Mammary epithelial cell (primary cell): ENCODE measurements at regions of chr3 and their contacts with region 1.

Region 1: GRCh38 chr3:197002701-197003454 is 26.7 kb downstream of the MELTF start:
- DNase-seq: peak; percentile 89
- H3K4me3 ChIP-seq: peak overlapping the region; percentile 38 to 68 (median 42)
- H3K27ac ChIP-seq: peak overlapping the region; percentile 20
- H3K4me1 ChIP-seq: peaks cover 23% of the 10 kb centered on the region
- H3K27me3 ChIP-seq: no peaks in the 10 kb centered on the region
- CTCF ChIP-seq: peak; percentile 36 to 61

Region 2: GRCh38 chr3:197029511-197030167 is 26.8 kb after region 1 on chr3 and contains the start of gene MELTF:
- CTCF ChIA-PET with region 1: interaction called, 3 read pairs
- dilution Hi-C with region 1: no loop called
- in situ Hi-C with region 1: no loop called
- intact Hi-C with region 1: loop called (anchors 2 kb)
- DNase-seq: no peak
- H3K4me3 ChIP-seq: peak within 1 kb of the TSS; percentile 26 to 43 (median 42)
- H3K27ac ChIP-seq: no peak within 1 kb of the TSS
- H3K4me1 ChIP-seq: peaks cover 32% of the 10 kb centered on the region
- H3K27me3 ChIP-seq: no peaks in the 10 kb centered on the region
- CTCF ChIP-seq: peak; percentile 34 to 59
- total RNA-seq, gene MELTF: 5.8 to 11.7 TPM

Region 3: GRCh38 chr3:197038679-197039462 is 36.0 kb after region 1 on chr3:
- CTCF ChIA-PET with region 1: interaction called, 3 read pairs
- dilution Hi-C with region 1: loop called (anchors 5 kb)
- in situ Hi-C with region 1: no loop called
- intact Hi-C with region 1: loop called (anchors 2 kb)
- DNase-seq: peak; percentile 83
- H3K4me3 ChIP-seq: no peak overlapping the region
- H3K27ac ChIP-seq: no peak overlapping the region
- H3K4me1 ChIP-seq: peaks cover 19% of the 10 kb centered on the region
- H3K27me3 ChIP-seq: no peaks in the 10 kb centered on the region
- CTCF ChIP-seq: no peak

Region 4: DNA sequence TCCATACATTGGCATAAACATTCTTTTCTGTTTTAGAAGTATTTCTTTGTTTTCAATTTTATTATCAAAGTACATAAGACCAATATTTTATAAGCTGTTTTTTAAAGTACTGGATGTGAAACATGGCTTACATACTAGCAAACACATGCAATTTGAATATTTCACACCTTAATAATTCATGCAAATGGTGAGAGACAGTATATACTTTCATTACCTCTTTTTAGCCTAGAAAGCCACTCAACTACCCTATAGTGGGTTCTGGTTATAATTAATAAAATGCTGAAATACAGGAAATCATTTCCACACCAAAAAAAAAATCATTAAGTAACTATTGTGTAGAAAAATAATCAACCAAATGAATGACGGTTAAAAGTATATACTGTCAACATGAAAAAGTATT is 65.2 kb after region 1 on chr3:
- CTCF ChIA-PET with region 1: no interaction called
- dilution Hi-C with region 1: no loop called
- in situ Hi-C with region 1: no loop called
- intact Hi-C with region 1: loop called (anchors 5 kb)
- DNase-seq: no peak
- H3K4me3 ChIP-seq: no peak overlapping the region
- H3K27ac ChIP-seq: no peak overlapping the region
- H3K4me1 ChIP-seq: no peaks in the 10 kb centered on the region
- H3K27me3 ChIP-seq: no peaks in the 10 kb centered on the region
- CTCF ChIP-seq: no peak

Region 5: GRCh38 chr3:197186887-197187588 is 184.2 kb after region 1 on chr3:
- CTCF ChIA-PET with region 1: no interaction called
- dilution Hi-C with region 1: no loop called
- in situ Hi-C with region 1: no loop called
- intact Hi-C with region 1: loop called (anchors 1 kb)
- DNase-seq: peak; percentile 46
- H3K4me3 ChIP-seq: no peak overlapping the region
- H3K27ac ChIP-seq: no peak overlapping the region
- H3K4me1 ChIP-seq: no peaks in the 10 kb centered on the region
- H3K27me3 ChIP-seq: no peaks in the 10 kb centered on the region
- CTCF ChIP-seq: peak; percentile 83 to 95

Region 6: GRCh38 chr3:197511130-197511529 is 508.3 kb after region 1 on chr3:
- CTCF ChIA-PET with region 1: no interaction called
- dilution Hi-C with region 1: no loop called
- in situ Hi-C with region 1: loop called in 1 of 2 experiments (anchors 25 kb)
- intact Hi-C with region 1: loop called (anchors 1 kb)
- DNase-seq: peak; percentile 59
- H3K4me3 ChIP-seq: no peak overlapping the region
- H3K27ac ChIP-seq: no peak overlapping the region
- H3K4me1 ChIP-seq: peaks cover 30% of the 10 kb centered on the region
- H3K27me3 ChIP-seq: no peaks in the 10 kb centered on the region
- CTCF ChIP-seq: no peak

Region 7: DNA sequence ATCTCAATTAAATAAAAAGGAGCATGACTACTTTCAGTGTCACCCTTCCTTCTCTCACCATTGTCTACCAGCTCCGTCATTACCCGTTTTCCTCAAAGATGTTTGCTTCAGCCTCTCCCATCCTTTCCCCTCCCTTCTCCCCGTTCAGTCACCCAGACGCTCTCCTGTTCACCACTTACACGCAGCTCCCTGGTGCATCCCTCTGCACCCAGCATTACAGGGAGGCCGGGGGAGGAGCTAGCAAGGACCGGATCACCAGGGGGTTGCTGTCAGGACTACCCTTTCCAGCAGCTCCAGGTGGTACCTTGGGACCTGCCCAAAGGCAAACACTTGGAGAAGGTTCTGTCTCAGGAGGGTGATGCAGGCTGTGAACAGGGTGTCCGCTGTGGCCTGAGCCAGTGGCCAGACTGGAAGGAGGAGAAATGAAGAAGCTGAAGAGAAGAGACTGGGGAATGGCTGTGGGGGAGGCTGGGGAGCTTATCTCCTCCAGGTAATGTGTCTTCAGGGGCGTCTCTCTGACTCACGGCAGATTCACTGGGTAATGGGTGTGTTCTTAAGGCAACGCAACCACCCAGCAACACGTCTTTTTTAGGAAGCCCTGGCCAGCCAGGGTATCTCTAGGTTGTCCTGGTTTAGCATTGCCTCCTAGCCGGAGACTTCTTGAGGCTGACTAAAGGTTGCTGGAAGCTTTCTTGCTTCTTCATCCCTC is 574.6 kb after region 1 on chr3:
- CTCF ChIA-PET with region 1: no interaction called
- dilution Hi-C with region 1: loop called (anchors 5 kb)
- in situ Hi-C with region 1: no loop called
- intact Hi-C with region 1: no loop called
- DNase-seq: no peak
- H3K4me3 ChIP-seq: no peak overlapping the region
- H3K27ac ChIP-seq: no peak overlapping the region
- H3K4me1 ChIP-seq: peaks cover 8% of the 10 kb centered on the region
- H3K27me3 ChIP-seq: no peaks in the 10 kb centered on the region
- CTCF ChIP-seq: no peak